K562 (cell line): ENCODE measurements at regions of chr11 and their contacts with region 1.

Region 1: GRCh38 chr11:62732801-62733200 is 4.5 kb downstream of the TTC9C start:
- DNase-seq: no peak
- ATAC-seq: peak; percentile 25; the same call in 1 of the 3 replicates
- H3K4me3 ChIP-seq: no peak overlapping the region
- H3K27ac ChIP-seq: no peak overlapping the region
- H3K4me1 ChIP-seq: peaks cover 4 to 6% of the 10 kb centered on the region in 2 experiments; a peak in 3 of 5 replicates
- H3K27me3 ChIP-seq: no peaks in the 10 kb centered on the region
- CTCF ChIP-seq: peak; percentile 22 to 57 (median 37); a peak in 3 of 6 replicates
- EP300 ChIP-seq: no peak
- POLR2A ChIP-seq: no peak
- RAD21 ChIP-seq: peak in 1 of 2 experiments; percentile 28; a peak in 2 of 4 replicates

Region 2: GRCh38 chr11:62242021-62242420 is 490.8 kb before region 1 on chr11 and contains the start of gene SCGB1D2:
- CTCF ChIA-PET with region 1: no interaction called
- POLR2A ChIA-PET with region 1: no interaction called
- in situ Hi-C with region 1: no loop called
- intact Hi-C with region 1: no loop called
- DNase-seq: no peak
- ATAC-seq: no peak
- H3K4me3 ChIP-seq: no peak within 1 kb of the TSS
- H3K27ac ChIP-seq: no peak within 1 kb of the TSS
- H3K4me1 ChIP-seq: no peaks in the 10 kb centered on the region
- H3K27me3 ChIP-seq: peaks cover 0 to 21% of the 10 kb centered on the region in 2 experiments; a peak in 3 of 5 replicates
- CTCF ChIP-seq: no peak
- EP300 ChIP-seq: no peak
- POLR2A ChIP-seq: no peak
- RAD21 ChIP-seq: no peak
- polyA plus RNA-seq, gene SCGB1D2: not detected

Region 3: DNA sequence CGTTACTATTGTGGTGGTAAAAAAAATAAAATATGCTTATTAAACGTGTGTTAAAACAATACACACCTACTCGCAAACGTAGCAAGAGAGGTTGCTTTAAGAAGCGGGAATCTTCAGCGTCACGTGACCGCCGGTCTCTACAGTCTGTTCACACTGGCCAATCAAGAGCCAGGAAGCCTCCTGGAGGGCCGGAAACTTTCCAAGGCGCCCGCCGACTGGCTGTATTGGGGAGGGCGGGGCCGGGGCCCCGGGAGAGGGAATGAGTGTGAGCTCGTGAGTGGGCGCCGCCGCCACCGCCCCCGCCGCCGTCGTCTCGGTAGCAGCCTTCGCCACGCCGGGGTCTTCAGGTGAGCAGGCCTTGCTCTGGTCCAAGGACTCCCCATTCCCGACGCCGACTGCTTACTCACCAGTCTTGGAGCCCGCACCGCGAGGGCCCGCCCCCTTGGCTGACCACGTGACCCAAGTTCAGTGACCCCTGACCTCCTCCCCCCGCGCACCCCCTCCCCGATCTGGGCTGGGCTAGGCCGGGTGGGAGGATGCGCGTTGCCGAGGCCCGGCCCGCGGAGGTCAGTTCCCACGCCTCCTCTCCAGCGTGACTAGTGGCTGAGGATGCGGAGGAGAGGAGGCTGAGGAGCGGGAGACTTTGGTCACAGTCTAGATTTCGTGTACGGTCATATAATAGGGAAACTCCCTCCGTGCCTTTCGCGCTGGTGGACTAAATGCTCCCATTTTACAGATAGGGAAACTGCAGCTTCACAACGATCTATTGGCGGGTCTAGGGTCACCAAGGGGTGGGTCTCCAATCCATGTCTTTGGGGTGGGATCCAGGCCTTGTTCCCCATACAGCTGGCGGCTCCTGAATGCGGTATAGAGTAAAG is 38.6 kb after region 1 on chr11 and contains the start of gene TAF6L:
- CTCF ChIA-PET with region 1: interaction called, 12 read pairs
- POLR2A ChIA-PET with region 1: interaction called, 15 read pairs
- in situ Hi-C with region 1: no loop called
- intact Hi-C with region 1: loop called (anchors 1 kb)
- DNase-seq: peak; percentile 97 to 99 (median 98)
- ATAC-seq: peak; percentile 95
- H3K4me3 ChIP-seq: peak within 1 kb of the TSS; percentile 48
- H3K27ac ChIP-seq: peak within 1 kb of the TSS; percentile 88
- H3K4me1 ChIP-seq: peaks cover 9 to 24% of the 10 kb centered on the region in 2 experiments
- H3K27me3 ChIP-seq: no peaks in the 10 kb centered on the region
- CTCF ChIP-seq: no peak; a peak in 1 of 6 replicates
- EP300 ChIP-seq: no peak; the same call in 1 of the 2 replicates
- POLR2A ChIP-seq: peak; percentile 86
- RAD21 ChIP-seq: peak in 1 of 2 experiments; percentile 20; a peak in 2 of 4 replicates
- polyA plus RNA-seq, gene TAF6L: 0.04 to 0.25 TPM